Dorsolateral prefrontal cortex (tissue), 120 donors: ENCODE measurements at regions of chr6 and their contacts with region 1.

Region 1: DNA sequence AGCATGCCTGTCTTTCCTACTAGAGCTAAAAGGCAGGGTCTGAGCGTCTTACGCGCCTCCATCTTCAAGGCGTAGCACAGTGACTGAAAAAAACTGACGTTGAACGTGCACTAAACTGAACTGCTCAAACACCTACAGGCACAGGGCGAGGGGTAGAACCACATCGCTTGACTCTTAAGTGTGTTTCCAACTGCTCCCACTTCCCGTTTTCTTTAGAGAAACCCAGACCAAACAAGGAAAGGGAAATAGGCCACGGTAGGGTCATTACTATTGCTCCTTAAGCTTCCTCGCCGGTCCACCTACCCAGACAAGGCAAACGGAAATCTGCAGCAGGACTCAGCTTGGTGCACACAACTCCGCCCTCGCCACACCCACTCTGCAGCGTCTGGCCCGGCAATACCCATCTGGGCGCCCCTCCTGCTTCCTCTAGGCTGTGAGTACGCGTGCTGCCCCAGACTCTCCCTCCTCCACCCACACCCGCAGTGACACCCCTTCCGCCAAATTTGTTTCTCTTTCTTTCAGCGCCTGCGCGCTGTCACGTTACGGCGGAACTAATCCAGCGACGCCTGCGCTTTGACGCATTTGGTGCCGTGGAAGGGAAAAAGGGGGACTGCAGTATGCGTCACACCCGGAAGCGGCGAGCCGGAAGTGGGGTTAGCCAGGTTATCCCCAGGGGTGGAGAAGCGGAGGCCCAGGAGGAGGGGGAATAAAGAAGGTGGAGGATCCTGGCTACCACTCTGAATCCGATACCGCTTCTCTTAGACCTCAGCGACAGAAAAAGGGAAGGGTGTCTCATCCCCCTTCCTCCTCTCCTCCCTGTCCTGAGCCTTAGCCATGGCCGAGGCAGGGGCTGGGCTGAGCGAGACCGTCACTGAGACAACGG is at the start of gene PPP1R11:
- DNase-seq: peak; percentile 97 to 99 (median 98)
- H3K4me3 ChIP-seq: peak within 1 kb of the TSS; percentile 53 to 98 (median 82)
- H3K27ac ChIP-seq: peak within 1 kb of the TSS; percentile 69 to 95 (median 90)
- H3K27me3 ChIP-seq: peaks cover 0 to 14% (median 0%) of the 10 kb centered on the region in 45 donors
- CTCF ChIP-seq: peak in 24 of 56 donors; percentile 0 to 55 (median 26)
- total RNA-seq, gene PPP1R11: 44.4 to 86.3 (median 63.9) TPM

Region 2: DNA sequence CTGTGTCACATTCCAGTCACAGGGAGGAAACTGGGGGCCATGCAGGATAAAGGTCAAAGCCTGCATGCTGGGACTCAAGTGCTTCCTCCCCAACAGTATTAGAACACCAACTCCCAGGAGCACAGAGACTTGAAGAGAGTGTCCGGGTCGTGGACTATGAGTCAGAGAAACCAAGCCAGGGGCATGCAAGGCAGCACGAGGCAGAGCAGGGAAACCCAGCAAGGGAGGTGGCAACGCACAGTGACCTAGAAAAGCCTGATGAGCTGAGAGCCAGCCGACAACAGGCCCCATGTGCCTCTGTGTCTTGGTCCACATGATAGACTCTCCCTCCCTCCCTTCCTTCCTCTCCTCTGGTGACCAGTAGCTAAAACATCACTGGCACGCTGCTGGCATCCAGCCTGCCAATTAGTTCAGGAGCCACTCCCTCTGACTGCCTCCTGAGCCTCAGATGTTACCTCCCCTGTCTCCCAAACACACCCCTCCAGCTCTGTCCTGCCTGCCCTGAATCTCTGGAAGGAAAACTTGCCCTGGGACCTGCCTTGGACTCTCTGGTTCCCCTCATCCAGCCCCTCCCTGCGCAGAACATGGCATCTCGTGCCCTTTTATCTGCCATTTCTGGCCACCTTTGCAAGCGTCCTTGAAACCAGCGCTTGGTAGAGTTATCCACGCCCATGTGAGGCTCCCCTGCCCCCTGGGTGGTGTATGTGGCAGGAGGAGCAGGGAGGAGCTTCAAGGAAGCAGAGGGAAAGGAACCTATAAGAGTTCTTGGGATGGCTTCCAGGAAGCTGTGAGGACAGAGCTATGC is 25.0 kb after region 1 on chr6:
- intact Hi-C with region 1: loop called in 1 of 2 experiments (anchors 2 kb)
- DNase-seq: no peak
- H3K4me3 ChIP-seq: no peak overlapping the region
- H3K27ac ChIP-seq: no peak overlapping the region
- H3K27me3 ChIP-seq: peaks cover 0 to 84% (median 44%) of the 10 kb centered on the region in 45 donors
- CTCF ChIP-seq: no peak

Region 3: DNA sequence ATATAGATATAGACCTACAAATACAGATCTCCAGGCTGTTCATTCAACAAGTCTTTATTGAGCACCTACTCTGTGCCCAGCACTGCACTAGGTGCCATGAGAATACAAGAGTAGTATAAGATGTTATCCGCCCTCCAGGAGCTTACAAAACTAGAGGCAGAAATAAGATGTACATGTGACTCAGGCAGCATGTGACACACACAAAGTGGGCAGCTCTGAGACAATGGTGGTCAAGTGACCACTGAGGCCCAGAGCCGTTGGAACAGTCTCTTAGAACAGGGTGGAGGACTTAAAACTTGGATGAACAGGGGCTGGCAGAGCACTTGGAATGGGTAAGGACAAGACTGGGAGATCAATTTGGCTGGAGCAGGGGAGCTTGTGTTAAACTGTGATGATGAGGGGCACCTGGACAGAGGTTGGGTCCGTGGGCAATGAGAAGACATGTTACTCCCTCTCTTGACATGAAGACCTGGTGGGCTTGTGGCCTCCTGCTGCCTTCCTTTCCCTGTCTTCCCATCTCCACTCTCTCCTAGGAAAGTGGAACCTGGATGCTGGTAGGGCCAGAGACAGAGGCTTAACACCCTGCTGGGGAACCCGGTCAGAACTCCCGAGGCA is 117.7 kb after region 1 on chr6:
- intact Hi-C with region 1: no loop called
- DNase-seq: no peak
- H3K4me3 ChIP-seq: no peak overlapping the region
- H3K27ac ChIP-seq: no peak overlapping the region
- H3K27me3 ChIP-seq: peaks cover 0 to under 1% (median 0%) of the 10 kb centered on the region in 45 donors
- CTCF ChIP-seq: no peak

Region 4: GRCh38 chr6:30212865-30213666 is 146.2 kb after region 1 on chr6 and contains the start of gene TRIM26:
- intact Hi-C with region 1: loop called (anchors 2 to 5 kb)
- DNase-seq: peak; percentile 92 to 98 (median 96)
- H3K4me3 ChIP-seq: peak within 1 kb of the TSS; percentile 62 to 100 (median 93)
- H3K27ac ChIP-seq: peak within 1 kb of the TSS; percentile 86 to 99 (median 96)
- H3K27me3 ChIP-seq: no peaks in the 10 kb centered on the region
- CTCF ChIP-seq: peak in 9 of 56 donors; percentile 4 to 29 (median 9)
- total RNA-seq, gene TRIM26: 22.4 to 51.1 (median 31.6) TPM